WTC11 (cell line): ENCODE measurements at regions of chr17 and their contacts with region 1.

Region 1: GRCh38 chr17:63611354-63611753 is 10.7 kb downstream of the TACO1 start:
- DNase-seq: no peak
- ATAC-seq: peak; percentile 46
- H3K4me3 Mint-ChIP-seq: no peak overlapping the region
- H3K27ac Mint-ChIP-seq: no peak overlapping the region
- H3K4me1 Mint-ChIP-seq: no peaks in the 10 kb centered on the region
- H3K27me3 Mint-ChIP-seq: no peaks in the 10 kb centered on the region
- CTCF ChIP-seq: no peak

Region 2: GRCh38 chr17:63434876-63435684 is 176.3 kb before region 1 on chr17:
- CTCF ChIA-PET with region 1: interaction called, 46 read pairs
- POLR2A ChIA-PET with region 1: interaction called, 4 read pairs
- DNase-seq: peak; percentile 43
- ATAC-seq: no peak
- H3K4me3 Mint-ChIP-seq: no peak overlapping the region
- H3K27ac Mint-ChIP-seq: peak overlapping the region; percentile 36; the same call in 1 of the 2 replicates
- H3K4me1 Mint-ChIP-seq: peaks cover 25% of the 10 kb centered on the region
- H3K27me3 Mint-ChIP-seq: no peaks in the 10 kb centered on the region
- CTCF ChIP-seq: peak; percentile 19; the same call in 1 of the 2 replicates

Region 3: GRCh38 chr17:63497708-63498483 is 113.5 kb before region 1 on chr17:
- CTCF ChIA-PET with region 1: interaction called, 10 read pairs
- POLR2A ChIA-PET with region 1: no interaction called
- DNase-seq: peak; percentile 72
- ATAC-seq: peak; percentile 94
- H3K4me3 Mint-ChIP-seq: no peak overlapping the region
- H3K27ac Mint-ChIP-seq: 0 out of 2 replicates have a peak overlapping the region, but pooled peaks have one; percentile 36
- H3K4me1 Mint-ChIP-seq: peaks cover 8% of the 10 kb centered on the region
- H3K27me3 Mint-ChIP-seq: no peaks in the 10 kb centered on the region; the same call in 1 of the 2 replicates
- CTCF ChIP-seq: no peak

Region 4: GRCh38 chr17:63571763-63572271 is 39.5 kb before region 1 on chr17:
- CTCF ChIA-PET with region 1: interaction called, 11 read pairs
- POLR2A ChIA-PET with region 1: no interaction called
- DNase-seq: no peak
- ATAC-seq: no peak
- H3K4me3 Mint-ChIP-seq: no peak overlapping the region
- H3K27ac Mint-ChIP-seq: peak overlapping the region; percentile 35; the same call in 1 of the 2 replicates
- H3K4me1 Mint-ChIP-seq: no peaks in the 10 kb centered on the region
- H3K27me3 Mint-ChIP-seq: no peaks in the 10 kb centered on the region
- CTCF ChIP-seq: no peak

Region 5: DNA sequence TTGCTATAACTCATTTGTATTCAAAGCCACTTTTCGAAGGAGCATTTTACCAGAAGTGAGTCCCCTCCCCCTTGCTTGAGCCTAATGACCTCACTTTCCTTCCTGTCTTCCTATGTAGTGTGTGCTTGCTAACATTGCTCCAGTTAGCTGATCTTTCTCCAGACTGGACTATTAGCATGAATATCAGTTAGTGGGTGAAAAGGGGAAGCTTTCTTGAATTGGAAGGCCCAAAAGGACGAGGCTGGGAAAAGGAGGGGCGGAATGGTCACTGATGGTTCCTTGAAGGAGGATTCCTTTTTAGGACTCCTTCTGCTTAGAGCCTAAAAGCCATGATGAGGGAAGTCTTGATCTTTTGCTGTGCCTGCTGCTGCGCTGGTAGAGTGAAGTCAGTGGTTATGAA is 22.8 kb after region 1 on chr17:
- CTCF ChIA-PET with region 1: interaction called, 18 read pairs
- POLR2A ChIA-PET with region 1: no interaction called
- DNase-seq: no peak
- ATAC-seq: peak; percentile 70
- H3K4me3 Mint-ChIP-seq: no peak overlapping the region
- H3K27ac Mint-ChIP-seq: peak overlapping the region; percentile 85
- H3K4me1 Mint-ChIP-seq: peaks cover 47% of the 10 kb centered on the region
- H3K27me3 Mint-ChIP-seq: no peaks in the 10 kb centered on the region
- CTCF ChIP-seq: no peak

Region 6: GRCh38 chr17:63658366-63658765 is 47.0 kb after region 1 on chr17:
- CTCF ChIA-PET with region 1: no interaction called
- POLR2A ChIA-PET with region 1: no interaction called
- DNase-seq: no peak
- ATAC-seq: no peak
- H3K4me3 Mint-ChIP-seq: no peak overlapping the region
- H3K27ac Mint-ChIP-seq: no peak overlapping the region
- H3K4me1 Mint-ChIP-seq: peaks cover 2% of the 10 kb centered on the region; the same call in 1 of the 2 replicates
- H3K27me3 Mint-ChIP-seq: no peaks in the 10 kb centered on the region
- CTCF ChIP-seq: no peak